CD8-positive, alpha-beta T cell (primary cell): ENCODE measurements at regions of chr4 and their contacts with region 1.

Region 1: GRCh38 chr4:37389967-37390580 is 145.5 kb downstream of the NWD2 start:
- DNase-seq: peak in 3 of 9 experiments; percentile 8 to 45 (median 27)
- ATAC-seq: no peak
- H3K4me3 ChIP-seq: no peak overlapping the region
- H3K4me3 Mint-ChIP-seq: no peak overlapping the region
- H3K27ac ChIP-seq: no peak overlapping the region
- H3K27ac Mint-ChIP-seq: no peak overlapping the region
- H3K4me1 ChIP-seq: no peaks in the 10 kb centered on the region
- H3K4me1 Mint-ChIP-seq: no peaks in the 10 kb centered on the region
- H3K27me3 ChIP-seq: no peaks in the 10 kb centered on the region
- H3K27me3 Mint-ChIP-seq: peaks cover 9% of the 10 kb centered on the region
- CTCF ChIP-seq: peak; percentile 70

Region 2: GRCh38 chr4:36351082-36351666 is 1038.9 kb before region 1 on chr4:
- CTCF ChIA-PET with region 1: interaction called, 3 read pairs
- POLR2A ChIA-PET with region 1: no interaction called
- intact Hi-C with region 1: loop called (anchors 2 to 5 kb)
- DNase-seq: peak; percentile 57 to 83 (median 77)
- ATAC-seq: peak; percentile 87
- H3K4me3 ChIP-seq: no peak overlapping the region
- H3K4me3 Mint-ChIP-seq: no peak overlapping the region
- H3K27ac ChIP-seq: no peak overlapping the region
- H3K27ac Mint-ChIP-seq: no peak overlapping the region
- H3K4me1 ChIP-seq: no peaks in the 10 kb centered on the region
- H3K4me1 Mint-ChIP-seq: peaks cover 7% of the 10 kb centered on the region
- H3K27me3 ChIP-seq: no peaks in the 10 kb centered on the region
- H3K27me3 Mint-ChIP-seq: no peaks in the 10 kb centered on the region
- CTCF ChIP-seq: peak; percentile 97

Region 3: GRCh38 chr4:36414248-36414647 is 975.8 kb before region 1 on chr4:
- CTCF ChIA-PET with region 1: no interaction called
- POLR2A ChIA-PET with region 1: no interaction called
- intact Hi-C with region 1: loop called in 1 of 2 experiments (anchors 10 kb)
- DNase-seq: no peak
- ATAC-seq: no peak
- H3K4me3 ChIP-seq: no peak overlapping the region
- H3K4me3 Mint-ChIP-seq: no peak overlapping the region
- H3K27ac ChIP-seq: no peak overlapping the region
- H3K27ac Mint-ChIP-seq: no peak overlapping the region
- H3K4me1 ChIP-seq: no peaks in the 10 kb centered on the region
- H3K4me1 Mint-ChIP-seq: no peaks in the 10 kb centered on the region
- H3K27me3 ChIP-seq: peaks cover 8 to 11% of the 10 kb centered on the region in 2 experiments
- H3K27me3 Mint-ChIP-seq: peaks cover 31% of the 10 kb centered on the region
- CTCF ChIP-seq: no peak